ENCODE measurements at regions of chr14 and their contacts with region 1.

Region 1: GRCh38 chr14:91078095-91078737 is 17.8 kb upstream of the RPS6KA5 start:
- DNase-seq: peak; percentile 61
- H3K4me3 Mint-ChIP-seq: peak overlapping the region; percentile 9
- H3K27ac Mint-ChIP-seq: peak overlapping the region; percentile 78
- H3K4me1 Mint-ChIP-seq: peaks cover 40% of the 10 kb centered on the region
- H3K27me3 Mint-ChIP-seq: no peaks in the 10 kb centered on the region

Region 2: DNA sequence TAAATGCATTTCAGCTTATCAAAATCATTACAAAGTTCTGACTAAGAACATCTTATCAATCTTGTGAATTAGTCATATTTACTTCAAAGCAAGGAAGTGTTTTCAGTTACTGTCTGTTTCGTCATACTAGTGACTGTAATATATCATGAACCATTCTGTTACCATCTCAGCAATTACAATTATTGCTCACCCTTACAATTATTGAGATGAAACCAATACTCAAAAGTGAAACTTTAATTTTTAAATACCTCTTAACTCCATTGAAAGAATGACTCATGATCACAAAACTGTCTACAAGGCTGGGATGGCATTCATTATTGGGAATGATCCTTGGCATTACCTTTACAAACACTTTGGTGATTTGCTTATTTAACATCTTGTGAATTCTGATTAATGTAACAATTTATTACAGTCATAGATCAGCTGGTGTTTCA is 108.0 kb before region 1 on chr14:
- intact Hi-C with region 1: loop called (anchors 1 kb)
- DNase-seq: no peak
- H3K4me3 Mint-ChIP-seq: peak overlapping the region; percentile 66
- H3K27ac Mint-ChIP-seq: peak overlapping the region; percentile 93
- H3K4me1 Mint-ChIP-seq: peaks cover 45% of the 10 kb centered on the region
- H3K27me3 Mint-ChIP-seq: no peaks in the 10 kb centered on the region

Region 3: DNA sequence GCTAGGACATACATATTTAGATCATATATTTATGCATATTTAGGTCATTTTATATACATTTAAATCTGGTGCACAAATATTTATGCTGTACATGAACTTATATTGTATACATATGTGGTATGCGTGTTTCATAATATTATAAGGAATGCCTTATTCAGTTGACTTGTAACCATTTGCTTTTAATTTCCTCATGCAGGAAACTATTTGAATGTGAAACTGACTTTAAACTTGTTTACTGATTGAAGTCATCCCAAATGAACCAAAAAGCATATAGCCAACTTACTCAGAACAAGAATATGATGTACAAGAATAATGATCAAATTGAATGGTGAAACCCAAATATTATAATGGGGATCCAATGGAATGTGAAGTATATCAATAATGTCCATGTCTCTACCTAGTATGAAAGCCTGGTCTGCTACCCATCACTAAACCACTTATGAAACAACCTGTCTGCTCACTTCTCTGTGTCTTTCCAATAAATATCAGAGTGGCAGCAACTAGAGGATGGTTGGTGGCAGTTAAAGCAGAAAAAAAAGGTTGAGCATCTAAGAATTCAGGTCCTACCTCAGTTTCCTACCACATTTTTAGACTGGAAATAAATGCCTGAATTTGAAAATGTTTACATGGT is 56.1 kb before region 1 on chr14:
- intact Hi-C with region 1: loop called (anchors 1 kb)
- DNase-seq: no peak
- H3K4me3 Mint-ChIP-seq: peak overlapping the region; percentile 66
- H3K27ac Mint-ChIP-seq: peak overlapping the region; percentile 90
- H3K4me1 Mint-ChIP-seq: peaks cover 57% of the 10 kb centered on the region
- H3K27me3 Mint-ChIP-seq: no peaks in the 10 kb centered on the region

Region 4: GRCh38 chr14:91038438-91038837 is 39.8 kb before region 1 on chr14:
- intact Hi-C with region 1: loop called (anchors 2 kb)
- DNase-seq: no peak
- H3K4me3 Mint-ChIP-seq: no peak overlapping the region
- H3K27ac Mint-ChIP-seq: no peak overlapping the region
- H3K4me1 Mint-ChIP-seq: peaks cover 64% of the 10 kb centered on the region
- H3K27me3 Mint-ChIP-seq: no peaks in the 10 kb centered on the region

Region 5: GRCh38 chr14:91067186-91067585 is 11.0 kb before region 1 on chr14:
- intact Hi-C with region 1: loop called (anchors 1 kb)
- DNase-seq: peak; percentile 23
- H3K4me3 Mint-ChIP-seq: no peak overlapping the region
- H3K27ac Mint-ChIP-seq: peak overlapping the region; percentile 91
- H3K4me1 Mint-ChIP-seq: peaks cover 55% of the 10 kb centered on the region
- H3K27me3 Mint-ChIP-seq: no peaks in the 10 kb centered on the region

Region 6: DNA sequence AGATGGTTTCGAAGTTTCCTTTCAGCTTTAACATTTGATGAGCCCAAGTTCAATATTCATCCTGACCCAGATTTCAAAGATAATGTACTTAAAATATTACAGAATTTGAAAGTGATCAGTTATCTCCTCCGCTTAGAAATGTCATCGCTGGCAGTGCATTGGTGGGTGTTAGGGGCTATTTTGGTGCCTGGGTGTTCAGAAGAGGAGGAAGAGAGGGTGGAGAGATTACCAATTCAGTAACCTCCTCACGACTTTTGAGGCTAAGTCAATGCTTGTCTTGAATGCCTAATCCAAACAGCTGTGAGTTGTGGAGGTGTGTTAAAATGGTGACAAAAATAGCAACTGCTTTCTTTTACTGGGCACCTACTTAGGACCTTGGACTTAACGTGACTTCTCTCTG is 21.9 kb after region 1 on chr14:
- intact Hi-C with region 1: loop called (anchors 2 kb)
- DNase-seq: no peak
- H3K4me3 Mint-ChIP-seq: no peak overlapping the region
- H3K27ac Mint-ChIP-seq: peak overlapping the region; percentile 75
- H3K4me1 Mint-ChIP-seq: peaks cover 36% of the 10 kb centered on the region
- H3K27me3 Mint-ChIP-seq: no peaks in the 10 kb centered on the region

Region 7: DNA sequence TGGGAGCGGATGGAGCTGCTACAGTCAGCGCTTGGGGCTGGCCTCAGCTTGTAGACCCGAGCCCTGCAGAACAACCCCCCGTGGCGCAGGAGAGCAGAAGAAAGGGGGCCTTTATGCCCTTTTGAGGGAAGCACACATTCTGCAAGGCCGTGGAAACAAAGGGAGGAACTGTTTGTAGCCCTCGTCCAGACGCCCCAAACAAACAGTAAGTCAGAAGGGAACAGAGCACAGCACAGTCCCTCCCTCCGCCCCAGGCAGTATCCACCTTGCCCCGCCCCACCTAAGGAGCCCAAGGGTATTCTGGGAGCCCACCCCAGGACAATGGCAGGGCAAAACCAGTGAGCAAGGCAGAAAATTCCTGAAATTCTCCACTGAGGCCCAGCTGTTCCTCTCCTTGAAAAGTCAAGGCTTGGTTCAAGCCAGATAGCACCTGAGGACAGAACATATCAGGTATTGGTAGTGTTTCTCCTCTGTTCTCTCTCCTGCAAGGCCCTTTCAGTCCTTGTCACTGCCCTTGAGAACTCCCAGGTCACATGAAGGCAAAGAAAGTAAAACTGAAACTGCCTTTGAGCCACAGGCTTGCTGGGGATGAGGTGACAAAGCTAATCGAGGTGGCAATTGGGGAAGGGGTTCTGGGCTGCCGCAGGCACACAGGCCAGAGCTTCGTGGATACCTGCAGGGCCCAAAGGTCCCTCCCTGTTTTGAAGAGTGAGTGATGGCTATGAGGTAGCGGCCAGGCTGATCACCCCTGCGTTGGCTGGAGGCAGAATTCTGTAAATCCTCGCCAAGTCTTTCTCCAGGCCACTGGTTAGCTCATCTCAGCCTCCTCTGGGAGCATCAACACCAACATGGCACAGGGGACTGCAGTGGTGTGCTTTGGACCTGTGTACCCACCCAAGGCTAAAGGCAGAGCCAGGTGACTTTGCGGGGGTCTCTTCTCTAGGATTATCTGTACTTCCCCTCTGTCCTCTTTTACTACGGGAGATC is 36.2 kb after region 1 on chr14:
- intact Hi-C with region 1: loop called (anchors 1 kb)
- DNase-seq: peak; percentile 77
- H3K4me3 Mint-ChIP-seq: peak overlapping the region; percentile 95
- H3K27ac Mint-ChIP-seq: peak overlapping the region; percentile 92
- H3K4me1 Mint-ChIP-seq: peaks cover 59% of the 10 kb centered on the region
- H3K27me3 Mint-ChIP-seq: no peaks in the 10 kb centered on the region

Region 8: DNA sequence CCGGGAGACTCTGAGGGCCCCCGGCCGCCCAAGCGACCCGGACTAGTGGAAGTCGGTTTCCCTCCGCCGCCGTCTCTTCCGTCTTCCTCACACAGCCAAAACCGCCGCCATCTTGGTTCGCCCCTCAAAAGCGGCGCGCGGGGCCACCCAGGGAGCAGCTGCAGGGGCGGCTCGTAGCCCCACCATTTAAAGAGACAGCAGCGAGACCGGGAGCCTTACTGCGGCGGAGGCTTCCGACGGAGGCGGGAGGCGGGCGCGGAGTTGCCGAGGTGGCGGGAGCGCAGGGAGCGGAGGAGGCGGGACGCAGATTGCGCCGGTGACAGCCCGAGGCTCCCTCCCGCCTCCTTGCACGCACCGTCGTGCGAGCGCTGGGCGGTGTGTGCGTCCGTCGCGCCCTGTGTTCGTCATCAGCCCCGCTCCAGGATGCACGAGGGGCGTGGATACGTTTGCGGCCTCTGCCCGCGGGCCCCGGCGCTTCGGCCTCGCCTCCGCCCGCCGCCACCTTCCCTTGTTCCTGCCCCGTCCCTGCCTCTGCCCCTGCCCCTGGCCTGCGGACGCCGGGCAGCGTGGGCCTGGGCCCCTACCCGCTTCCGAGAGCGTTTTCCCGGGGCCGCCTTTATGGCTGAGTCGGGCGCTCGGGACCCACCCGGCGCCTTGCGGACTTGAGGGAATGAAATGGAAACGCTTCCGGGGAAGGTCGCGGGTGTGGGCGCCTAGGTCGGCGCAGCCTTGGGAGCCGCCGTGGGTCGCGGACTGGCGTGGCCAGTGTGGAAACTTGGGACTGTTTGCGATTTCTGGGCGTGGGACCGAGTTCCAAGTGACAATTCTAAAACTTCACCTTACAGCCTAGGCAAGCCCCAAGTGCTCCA is 432.2 kb after region 1 on chr14 and contains the start of gene PPP4R3A:
- intact Hi-C with region 1: no loop called
- DNase-seq: peak; percentile 94
- H3K4me3 Mint-ChIP-seq: peak within 1 kb of the TSS; percentile 97
- H3K27ac Mint-ChIP-seq: peak within 1 kb of the TSS; percentile 99
- H3K4me1 Mint-ChIP-seq: peaks cover 21% of the 10 kb centered on the region
- H3K27me3 Mint-ChIP-seq: peaks cover 2% of the 10 kb centered on the region
- total RNA-seq, gene PPP4R3A: 104 and 121 TPM in 2 replicates